Naive thymus-derived CD4-positive, alpha-beta T cell (primary cell): ENCODE measurements at regions of chr7 and their contacts with region 1.

Region 1: DNA sequence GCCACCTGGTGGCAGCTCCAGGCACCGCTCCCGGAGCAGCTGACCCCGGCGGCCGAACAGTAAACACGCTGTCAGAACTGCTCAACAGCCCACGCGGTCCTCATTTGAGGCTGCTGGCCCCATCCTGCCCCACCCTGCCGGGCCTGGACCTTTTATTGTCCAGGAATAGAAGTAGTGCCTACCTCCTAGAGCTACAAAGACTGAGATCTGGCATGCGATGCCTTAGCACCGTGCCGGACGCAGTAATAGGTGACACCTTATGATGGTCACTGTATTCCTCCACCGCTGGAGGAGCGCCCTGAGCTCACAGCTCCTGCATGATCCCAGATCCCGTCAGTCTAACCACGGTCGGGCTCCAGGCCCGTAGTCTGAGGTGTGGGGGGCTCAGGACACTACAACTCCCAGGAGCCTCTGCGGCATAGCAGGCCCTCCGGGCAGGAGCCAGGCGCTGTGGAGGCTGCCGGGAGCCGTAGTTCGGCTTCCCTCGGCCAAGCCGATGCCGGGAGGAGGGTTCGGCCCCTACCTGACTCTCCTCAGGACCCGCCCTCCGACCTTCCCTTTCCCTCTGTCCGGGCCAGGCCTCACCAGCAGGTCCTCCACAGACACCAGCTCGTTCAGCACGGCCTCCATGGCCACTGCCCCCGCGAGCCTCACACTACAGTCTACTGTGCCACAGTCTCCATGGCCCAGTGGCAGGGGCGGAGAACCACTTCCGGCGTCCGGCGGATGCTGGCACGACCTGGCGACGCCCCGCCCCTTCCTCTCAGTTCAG is at the start of gene FIS1:
- DNase-seq: peak; percentile 87 to 96 (median 94)
- ATAC-seq: peak; percentile 96
- H3K4me3 ChIP-seq: peak within 1 kb of the TSS; percentile 100
- H3K4me3 Mint-ChIP-seq: peak within 1 kb of the TSS; percentile 88 to 100 (median 98)
- H3K27ac ChIP-seq: peak within 1 kb of the TSS; percentile 93
- H3K27ac Mint-ChIP-seq: peak within 1 kb of the TSS; percentile 93 to 100 (median 97)
- H3K4me1 ChIP-seq: peaks cover 14 to 16% of the 10 kb centered on the region in 2 donors
- H3K4me1 Mint-ChIP-seq: peaks cover 16 to 45% (median 35%) of the 10 kb centered on the region in 7 donors
- H3K27me3 ChIP-seq: no peaks in the 10 kb centered on the region
- H3K27me3 Mint-ChIP-seq: no peaks in the 10 kb centered on the region
- total RNA-seq, gene FIS1: 79.8 to 121 (median 107) TPM

Region 2: GRCh38 chr7:100538654-100539435 is 705.7 kb before region 1 on chr7 and contains the start of gene AGFG2:
- CTCF ChIA-PET with region 1: no interaction called
- POLR2A ChIA-PET with region 1: no interaction called
- intact Hi-C with region 1: loop called in 1 of 2 experiments (anchors 5 kb)
- DNase-seq: peak; percentile 98 to 100 (median 100)
- ATAC-seq: peak; percentile 99
- H3K4me3 ChIP-seq: peak within 1 kb of the TSS; percentile 73
- H3K4me3 Mint-ChIP-seq: peak within 1 kb of the TSS; percentile 85 to 100 (median 96)
- H3K27ac ChIP-seq: peak within 1 kb of the TSS; percentile 64
- H3K27ac Mint-ChIP-seq: peak within 1 kb of the TSS; percentile 82 to 97 (median 90)
- H3K4me1 ChIP-seq: peaks cover 30 to 39% of the 10 kb centered on the region in 2 donors
- H3K4me1 Mint-ChIP-seq: peaks cover 26 to 53% (median 48%) of the 10 kb centered on the region in 7 donors
- H3K27me3 ChIP-seq: no peaks in the 10 kb centered on the region
- H3K27me3 Mint-ChIP-seq: peaks cover 0 to 2% (median 0%) of the 10 kb centered on the region in 5 donors
- total RNA-seq, gene AGFG2: 15.8 to 42.4 (median 23.3) TPM

Region 3: DNA sequence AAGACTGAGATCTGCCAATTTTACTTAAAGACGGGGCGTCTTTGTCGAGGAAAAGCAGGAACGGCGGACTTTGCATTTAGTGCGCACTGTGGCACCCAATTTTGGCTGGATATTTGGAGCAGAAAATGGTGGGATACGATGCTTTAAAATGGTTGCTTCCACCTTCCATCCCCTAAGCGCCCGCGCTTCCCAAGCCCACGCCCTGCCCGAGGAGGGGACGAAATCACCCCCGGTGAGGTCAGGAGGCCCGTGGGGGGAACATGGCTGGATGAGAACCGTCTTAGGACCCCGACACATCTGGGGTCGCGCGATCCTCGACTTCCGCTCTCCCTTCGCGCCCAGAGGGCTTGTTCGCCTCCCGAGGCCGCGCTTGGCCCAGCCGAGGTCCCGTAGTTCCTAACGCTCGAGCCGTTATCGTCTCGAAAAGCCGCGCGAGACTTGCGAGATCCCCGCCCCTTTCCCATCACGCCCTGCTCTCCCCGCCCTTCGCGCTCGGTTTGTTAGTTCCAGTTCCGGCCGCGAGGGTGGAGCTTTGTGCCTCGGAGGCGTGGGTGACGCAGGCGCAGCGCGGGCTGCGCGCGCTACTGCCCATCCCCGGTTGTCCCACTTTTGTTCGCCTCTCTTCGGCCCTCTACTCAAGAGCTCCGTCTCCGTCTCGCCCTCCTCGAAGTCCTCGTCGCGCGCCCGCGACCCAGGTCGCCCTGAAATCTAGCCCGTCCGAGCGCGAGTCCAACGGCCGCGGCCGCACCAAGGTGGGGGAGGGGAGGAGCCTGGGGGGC is 369.8 kb before region 1 on chr7 and contains the start of gene SRRT:
- CTCF ChIA-PET with region 1: no interaction called
- POLR2A ChIA-PET with region 1: interaction called, 3 read pairs
- intact Hi-C with region 1: loop called in 1 of 2 experiments (anchors 10 kb)
- DNase-seq: peak; percentile 92 to 99 (median 97)
- ATAC-seq: peak; percentile 98
- H3K4me3 ChIP-seq: peak within 1 kb of the TSS; percentile 78
- H3K4me3 Mint-ChIP-seq: peak within 1 kb of the TSS; percentile 96 to 100 (median 98)
- H3K27ac ChIP-seq: peak within 1 kb of the TSS; percentile 94
- H3K27ac Mint-ChIP-seq: peak within 1 kb of the TSS; percentile 97 to 99 (median 98)
- H3K4me1 ChIP-seq: peaks cover 22 to 30% of the 10 kb centered on the region in 2 donors
- H3K4me1 Mint-ChIP-seq: peaks cover 27 to 55% (median 52%) of the 10 kb centered on the region in 7 donors
- H3K27me3 ChIP-seq: no peaks in the 10 kb centered on the region
- H3K27me3 Mint-ChIP-seq: no peaks in the 10 kb centered on the region
- total RNA-seq, gene SRRT: 212 to 271 (median 261) TPM

Region 4: DNA sequence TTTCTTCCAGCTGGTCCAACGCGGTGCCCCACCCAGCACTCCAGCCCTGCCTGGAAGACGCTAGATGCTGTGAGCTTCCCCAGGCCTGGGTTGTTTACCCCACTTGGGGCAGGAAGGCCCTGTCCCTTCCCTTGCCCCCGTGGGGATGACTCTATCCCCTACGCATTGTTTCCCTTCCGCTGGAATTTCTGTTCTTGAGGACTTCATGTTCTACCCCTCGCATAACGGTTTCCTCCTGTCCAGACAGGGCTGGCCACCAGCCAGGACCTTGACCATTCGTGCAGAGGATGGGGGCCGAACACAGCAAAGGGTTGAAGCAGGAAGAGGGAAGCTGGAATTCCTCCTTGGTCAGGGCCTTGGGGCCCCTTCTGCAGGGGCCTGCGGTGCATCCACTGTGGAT is 132.3 kb before region 1 on chr7:
- CTCF ChIA-PET with region 1: no interaction called
- POLR2A ChIA-PET with region 1: no interaction called
- intact Hi-C with region 1: no loop called
- DNase-seq: no peak
- ATAC-seq: no peak
- H3K4me3 ChIP-seq: no peak overlapping the region
- H3K4me3 Mint-ChIP-seq: no peak overlapping the region
- H3K27ac ChIP-seq: no peak overlapping the region
- H3K27ac Mint-ChIP-seq: no peak overlapping the region
- H3K4me1 ChIP-seq: no peaks in the 10 kb centered on the region
- H3K4me1 Mint-ChIP-seq: no peaks in the 10 kb centered on the region
- H3K27me3 ChIP-seq: no peaks in the 10 kb centered on the region
- H3K27me3 Mint-ChIP-seq: peaks cover 0 to 5% (median 4%) of the 10 kb centered on the region in 5 donors

Region 5: DNA sequence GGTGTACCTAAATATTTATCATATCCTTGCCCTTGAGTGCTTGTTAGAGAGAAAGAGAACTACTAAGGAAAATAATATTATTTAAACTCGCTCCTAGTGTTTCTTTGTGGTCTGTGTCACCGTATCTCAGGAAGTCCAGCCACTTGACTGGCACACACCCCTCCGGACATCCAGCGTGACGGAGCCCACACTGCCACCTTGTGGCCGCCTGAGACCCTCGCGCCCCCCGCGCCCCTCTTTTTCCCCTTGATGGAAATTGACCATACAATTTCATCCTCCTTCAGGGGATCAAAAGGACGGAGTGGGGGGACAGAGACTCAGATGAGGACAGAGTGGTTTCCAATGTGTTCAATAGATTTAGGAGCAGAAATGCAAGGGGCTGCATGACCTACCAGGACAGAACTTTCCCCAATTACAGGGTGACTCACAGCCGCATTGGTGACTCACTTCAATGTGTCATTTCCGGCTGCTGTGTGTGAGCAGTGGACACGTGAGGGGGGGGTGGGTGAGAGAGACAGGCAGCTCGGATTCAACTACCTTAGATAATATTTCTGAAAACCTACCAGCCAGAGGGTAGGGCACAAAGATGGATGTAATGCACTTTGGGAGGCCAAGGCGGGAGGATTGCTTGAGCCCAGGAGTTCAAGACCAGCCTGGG is 106.2 kb before region 1 on chr7:
- CTCF ChIA-PET with region 1: interaction called, 15 read pairs
- POLR2A ChIA-PET with region 1: no interaction called
- intact Hi-C with region 1: no loop called
- DNase-seq: peak in 3 of 9 donors; percentile 15 to 73 (median 70)
- ATAC-seq: peak; percentile 93
- H3K4me3 ChIP-seq: no peak overlapping the region
- H3K4me3 Mint-ChIP-seq: peak overlapping the region in 3 of 10 donors; percentile 46 to 70 (median 47)
- H3K27ac ChIP-seq: no peak overlapping the region
- H3K27ac Mint-ChIP-seq: peak overlapping the region in 3 of 9 donors; percentile 52 to 71 (median 62)
- H3K4me1 ChIP-seq: peaks cover 0 to 4% of the 10 kb centered on the region in 2 donors
- H3K4me1 Mint-ChIP-seq: peaks cover 0 to 30% (median 9%) of the 10 kb centered on the region in 7 donors
- H3K27me3 ChIP-seq: no peaks in the 10 kb centered on the region
- H3K27me3 Mint-ChIP-seq: peaks cover 4 to 44% (median 21%) of the 10 kb centered on the region in 5 donors

Region 6: DNA sequence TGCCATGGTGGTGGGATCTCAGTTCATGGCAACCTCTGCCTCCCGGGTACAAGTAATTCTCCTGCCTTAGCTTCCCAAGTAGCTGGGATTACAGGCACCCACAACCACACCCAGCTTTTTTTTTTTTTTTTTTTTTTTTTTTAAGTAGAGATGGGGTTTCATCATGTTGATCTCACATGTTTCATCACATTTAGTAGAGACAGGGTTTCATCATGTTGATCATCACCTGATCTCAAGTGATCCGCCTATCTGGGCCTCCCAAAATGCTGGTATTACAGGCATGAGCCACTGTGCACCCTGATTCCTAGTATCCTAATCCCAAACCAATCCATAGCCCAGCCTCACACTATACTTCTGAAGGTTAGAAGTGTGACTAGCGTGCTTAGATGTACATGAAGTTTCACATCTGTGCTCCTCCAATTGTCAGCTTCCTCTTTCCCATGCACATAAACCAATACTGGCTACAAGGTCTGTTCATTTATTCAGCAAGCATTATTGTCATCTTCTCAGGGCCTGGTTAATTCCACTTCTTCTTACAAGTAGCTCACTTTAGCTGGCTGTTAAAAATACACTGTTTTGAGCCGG is 57.6 kb before region 1 on chr7:
- CTCF ChIA-PET with region 1: no interaction called
- POLR2A ChIA-PET with region 1: no interaction called
- intact Hi-C with region 1: loop called in 1 of 2 experiments (anchors 1 kb)
- DNase-seq: no peak
- ATAC-seq: no peak
- H3K4me3 ChIP-seq: no peak overlapping the region
- H3K4me3 Mint-ChIP-seq: no peak overlapping the region
- H3K27ac ChIP-seq: no peak overlapping the region
- H3K27ac Mint-ChIP-seq: no peak overlapping the region
- H3K4me1 ChIP-seq: no peaks in the 10 kb centered on the region
- H3K4me1 Mint-ChIP-seq: peaks cover 0 to 7% (median 4%) of the 10 kb centered on the region in 7 donors
- H3K27me3 ChIP-seq: no peaks in the 10 kb centered on the region
- H3K27me3 Mint-ChIP-seq: peaks cover 20 to 32% (median 23%) of the 10 kb centered on the region in 5 donors

Region 7: DNA sequence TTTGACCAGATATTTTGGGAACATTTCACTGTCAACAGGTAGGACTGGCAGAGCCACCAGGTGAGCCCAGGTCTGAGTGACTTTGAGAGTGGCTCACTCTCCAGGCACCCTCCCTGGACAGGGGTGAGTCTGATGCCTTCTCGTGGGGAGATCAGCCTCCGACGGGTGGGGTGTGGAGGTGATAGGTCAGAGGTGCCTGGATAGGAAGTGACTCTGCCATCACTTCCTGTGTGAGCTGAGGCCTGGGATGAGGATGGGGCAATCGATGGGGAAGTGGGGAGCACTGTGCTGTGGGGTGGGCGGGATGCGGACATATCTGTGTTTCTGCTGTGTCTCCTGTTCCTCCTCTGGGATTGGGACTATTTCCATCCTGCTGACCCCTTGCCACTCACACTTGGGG is 42.5 kb after region 1 on chr7:
- CTCF ChIA-PET with region 1: interaction called, 4 read pairs
- POLR2A ChIA-PET with region 1: no interaction called
- intact Hi-C with region 1: loop called in 1 of 2 experiments (anchors 2 kb)
- DNase-seq: no peak
- ATAC-seq: no peak
- H3K4me3 ChIP-seq: no peak overlapping the region
- H3K4me3 Mint-ChIP-seq: no peak overlapping the region
- H3K27ac ChIP-seq: no peak overlapping the region
- H3K27ac Mint-ChIP-seq: no peak overlapping the region
- H3K4me1 ChIP-seq: no peaks in the 10 kb centered on the region
- H3K4me1 Mint-ChIP-seq: peaks cover 3 to 17% (median 5%) of the 10 kb centered on the region in 7 donors
- H3K27me3 ChIP-seq: no peaks in the 10 kb centered on the region
- H3K27me3 Mint-ChIP-seq: peaks cover 6 to 21% (median 9%) of the 10 kb centered on the region in 5 donors

Region 8: GRCh38 chr7:103074519-103075336 is 1830.2 kb after region 1 on chr7 and contains the starts of genes ARMC10 and FBXL13:
- CTCF ChIA-PET with region 1: no interaction called
- POLR2A ChIA-PET with region 1: no interaction called
- intact Hi-C with region 1: loop called in 1 of 2 experiments (anchors 10 kb)
- DNase-seq: peak; percentile 86 to 93 (median 88)
- ATAC-seq: peak; percentile 93
- H3K4me3 ChIP-seq: peak within 1 kb of the TSS; percentile 77
- H3K4me3 Mint-ChIP-seq: peak within 1 kb of the TSS; percentile 94 to 100 (median 97)
- H3K27ac ChIP-seq: peak within 1 kb of the TSS; percentile 81
- H3K27ac Mint-ChIP-seq: peak within 1 kb of the TSS; percentile 85 to 98 (median 93)
- H3K4me1 ChIP-seq: peaks cover 14 to 18% of the 10 kb centered on the region in 2 donors
- H3K4me1 Mint-ChIP-seq: peaks cover 21 to 53% (median 47%) of the 10 kb centered on the region in 7 donors
- H3K27me3 ChIP-seq: no peaks in the 10 kb centered on the region
- H3K27me3 Mint-ChIP-seq: peaks cover 0 to 2% (median 0%) of the 10 kb centered on the region in 5 donors
- total RNA-seq, gene ARMC10: 13.6 to 36.4 (median 27.5) TPM
- total RNA-seq, gene FBXL13: 0.44 to 1.9 (median 1.2) TPM